GM12878 (cell line): ENCODE measurements at regions of chr20 and their contacts with region 1.

Region 1: GRCh38 chr20:53708129-53708968 is 114.7 kb upstream of the ZNF217 start:
- DNase-seq: peak; percentile 94
- ATAC-seq: peak; percentile 83
- H3K4me3 ChIP-seq: peak overlapping the region; percentile 43; the same call in 1 of the 2 replicates
- H3K27ac ChIP-seq: peak overlapping the region; percentile 97
- H3K4me1 ChIP-seq: peaks cover 45% of the 10 kb centered on the region
- H3K27me3 ChIP-seq: no peaks in the 10 kb centered on the region
- CTCF ChIP-seq: no peak
- EP300 ChIP-seq: peak in 1 of 2 experiments; percentile 35; a peak in 3 of 4 replicates
- POLR2A ChIP-seq: peak; percentile 36
- RAD21 ChIP-seq: 0 out of 2 replicates have a peak, but pooled peaks have one; percentile 6

Region 2: DNA sequence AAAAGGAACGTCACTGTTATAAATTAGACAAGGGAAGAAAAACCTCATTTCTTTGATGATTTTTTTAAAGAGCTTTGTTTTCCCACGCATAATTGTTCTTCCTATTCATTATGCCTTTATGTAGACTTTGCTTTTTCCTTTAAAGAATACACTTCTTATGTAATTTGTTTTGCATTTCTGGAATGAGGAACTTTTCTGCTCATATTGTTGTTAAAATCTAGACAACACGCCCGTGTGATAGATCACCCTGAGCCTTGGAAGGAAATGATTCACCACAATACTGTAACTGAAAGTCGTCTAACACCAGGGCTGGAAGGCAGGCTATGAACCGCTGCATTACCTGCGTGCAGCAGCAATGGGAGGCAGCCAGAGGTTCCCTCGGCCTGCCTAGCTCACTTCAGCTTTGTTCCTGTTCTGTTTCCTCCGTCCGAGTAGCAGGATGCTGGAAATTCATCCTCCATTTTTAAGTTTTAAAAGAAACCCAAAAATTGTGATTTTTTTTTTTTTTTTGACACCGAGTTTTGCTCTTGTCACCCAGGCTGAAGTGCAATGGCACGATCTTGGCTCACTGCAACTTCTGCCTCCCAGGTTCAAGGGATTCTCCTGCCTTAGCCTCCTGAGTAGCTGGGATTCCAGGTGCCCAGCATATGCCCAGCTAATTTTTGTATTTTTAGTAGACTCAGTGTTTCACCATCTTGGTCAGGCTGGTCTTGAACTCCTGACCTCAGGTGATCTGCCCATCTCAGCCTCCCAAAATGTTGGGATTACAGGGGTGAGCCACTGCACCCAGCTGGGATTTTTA is 65.1 kb before region 1 on chr20:
- CTCF ChIA-PET with region 1: interaction called, 3 read pairs
- POLR2A ChIA-PET with region 1: interaction called, 5 read pairs
- RAD21 ChIA-PET with region 1: interaction called, 20 read pairs
- SMC1A ChIA-PET with region 1: interaction called, 11 read pairs
- in situ Hi-C with region 1: no loop called
- intact Hi-C with region 1: no loop called
- DNase-seq: peak; percentile 92
- ATAC-seq: peak; percentile 99
- H3K4me3 ChIP-seq: peak overlapping the region; percentile 37
- H3K27ac ChIP-seq: peak overlapping the region; percentile 88
- H3K4me1 ChIP-seq: peaks cover 15% of the 10 kb centered on the region
- H3K27me3 ChIP-seq: no peaks in the 10 kb centered on the region
- CTCF ChIP-seq: 0 out of 6 replicates have a peak, but pooled peaks of 1 of the 3 experiments have one; percentile 7
- EP300 ChIP-seq: peak; percentile 18 to 87; a peak in 3 of 4 replicates
- POLR2A ChIP-seq: peak; percentile 83
- RAD21 ChIP-seq: 0 out of 2 replicates have a peak, but pooled peaks have one; percentile 13

Region 3: GRCh38 chr20:53660078-53660909 is 48.1 kb before region 1 on chr20:
- CTCF ChIA-PET with region 1: interaction called, 6 read pairs
- POLR2A ChIA-PET with region 1: interaction called, 5 read pairs
- RAD21 ChIA-PET with region 1: interaction called, 30 read pairs
- SMC1A ChIA-PET with region 1: interaction called, 28 read pairs
- in situ Hi-C with region 1: no loop called
- intact Hi-C with region 1: loop called (anchors 2 kb)
- DNase-seq: no peak
- ATAC-seq: peak; percentile 27
- H3K4me3 ChIP-seq: peak overlapping the region; percentile 63
- H3K27ac ChIP-seq: peak overlapping the region; percentile 84
- H3K4me1 ChIP-seq: peaks cover 61% of the 10 kb centered on the region
- H3K27me3 ChIP-seq: no peaks in the 10 kb centered on the region
- CTCF ChIP-seq: no peak
- EP300 ChIP-seq: no peak; a peak in 1 of 4 replicates
- POLR2A ChIP-seq: peak; percentile 41; the same call in 1 of the 2 replicates
- RAD21 ChIP-seq: 0 out of 2 replicates have a peak, but pooled peaks have one; percentile 4

Region 4: GRCh38 chr20:53718142-53719021 is 10.0 kb after region 1 on chr20:
- CTCF ChIA-PET with region 1: interaction called, 7 read pairs
- POLR2A ChIA-PET with region 1: interaction called, 7 read pairs
- RAD21 ChIA-PET with region 1: interaction called, 16 read pairs
- SMC1A ChIA-PET with region 1: interaction called, 42 read pairs
- in situ Hi-C with region 1: no loop called
- intact Hi-C with region 1: no loop called
- DNase-seq: no peak
- ATAC-seq: no peak
- H3K4me3 ChIP-seq: no peak overlapping the region
- H3K27ac ChIP-seq: no peak overlapping the region
- H3K4me1 ChIP-seq: peaks cover 22% of the 10 kb centered on the region
- H3K27me3 ChIP-seq: no peaks in the 10 kb centered on the region
- CTCF ChIP-seq: no peak
- EP300 ChIP-seq: no peak
- POLR2A ChIP-seq: no peak
- RAD21 ChIP-seq: no peak